A673 (cell line): ENCODE measurements at regions of chr4 and their contacts with region 1.

Region 1: GRCh38 chr4:10204401-10205058 is 87.9 kb upstream of the WDR1 start:
- DNase-seq: no peak
- H3K4me3 ChIP-seq: no peak overlapping the region
- H3K27ac ChIP-seq: no peak overlapping the region
- H3K4me1 ChIP-seq: no peaks in the 10 kb centered on the region
- H3K27me3 ChIP-seq: no peaks in the 10 kb centered on the region
- CTCF ChIP-seq: no peak

Region 2: GRCh38 chr4:10237131-10237530 is 32.6 kb after region 1 on chr4:
- CTCF ChIA-PET with region 1: no interaction called
- POLR2A ChIA-PET with region 1: no interaction called
- intact Hi-C with region 1: loop called (anchors 1 kb)
- DNase-seq: no peak
- H3K4me3 ChIP-seq: no peak overlapping the region
- H3K27ac ChIP-seq: no peak overlapping the region
- H3K4me1 ChIP-seq: no peaks in the 10 kb centered on the region
- H3K27me3 ChIP-seq: peaks cover 8% of the 10 kb centered on the region
- CTCF ChIP-seq: no peak

Region 3: GRCh38 chr4:10346023-10346422 is 141.5 kb after region 1 on chr4:
- CTCF ChIA-PET with region 1: no interaction called
- POLR2A ChIA-PET with region 1: no interaction called
- intact Hi-C with region 1: no loop called
- DNase-seq: no peak
- H3K4me3 ChIP-seq: no peak overlapping the region
- H3K27ac ChIP-seq: no peak overlapping the region
- H3K4me1 ChIP-seq: no peaks in the 10 kb centered on the region
- H3K27me3 ChIP-seq: no peaks in the 10 kb centered on the region
- CTCF ChIP-seq: no peak